Spleen (tissue), 13 donors: ENCODE measurements at regions of chr11 and their contacts with region 1.

Region 1: DNA sequence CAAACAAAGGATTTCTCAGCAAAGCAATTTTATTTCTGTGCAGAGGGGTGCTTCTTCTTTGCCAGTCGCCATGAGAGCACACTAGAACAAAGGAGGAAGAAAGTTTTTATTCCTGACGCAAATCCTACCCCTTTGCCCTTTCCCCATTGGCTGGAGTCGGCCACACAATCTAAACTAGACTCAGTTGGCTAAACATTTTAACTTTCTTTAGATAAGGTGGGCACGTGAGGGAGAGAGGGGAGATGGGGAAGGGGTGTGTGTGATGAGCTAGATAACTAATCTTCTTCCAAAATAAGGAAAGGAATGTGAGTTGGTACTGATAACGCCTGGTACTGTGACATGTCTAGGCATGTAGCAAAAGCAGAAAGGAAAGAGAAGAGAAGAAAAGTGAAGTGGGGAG is 626 bp downstream of the TRIM22 start:
- DNase-seq: no peak
- H3K4me3 ChIP-seq: peak overlapping the region; percentile 41 to 74 (median 70)
- H3K27ac ChIP-seq: peak overlapping the region; percentile 87 to 97 (median 95)
- H3K4me1 ChIP-seq: peaks cover 25 to 68% (median 47%) of the 10 kb centered on the region in 6 donors
- H3K27me3 ChIP-seq: no peaks in the 10 kb centered on the region
- CTCF ChIP-seq: no peak
- POLR2A ChIP-seq: peak in 1 of 3 donors; percentile 37

Region 2: DNA sequence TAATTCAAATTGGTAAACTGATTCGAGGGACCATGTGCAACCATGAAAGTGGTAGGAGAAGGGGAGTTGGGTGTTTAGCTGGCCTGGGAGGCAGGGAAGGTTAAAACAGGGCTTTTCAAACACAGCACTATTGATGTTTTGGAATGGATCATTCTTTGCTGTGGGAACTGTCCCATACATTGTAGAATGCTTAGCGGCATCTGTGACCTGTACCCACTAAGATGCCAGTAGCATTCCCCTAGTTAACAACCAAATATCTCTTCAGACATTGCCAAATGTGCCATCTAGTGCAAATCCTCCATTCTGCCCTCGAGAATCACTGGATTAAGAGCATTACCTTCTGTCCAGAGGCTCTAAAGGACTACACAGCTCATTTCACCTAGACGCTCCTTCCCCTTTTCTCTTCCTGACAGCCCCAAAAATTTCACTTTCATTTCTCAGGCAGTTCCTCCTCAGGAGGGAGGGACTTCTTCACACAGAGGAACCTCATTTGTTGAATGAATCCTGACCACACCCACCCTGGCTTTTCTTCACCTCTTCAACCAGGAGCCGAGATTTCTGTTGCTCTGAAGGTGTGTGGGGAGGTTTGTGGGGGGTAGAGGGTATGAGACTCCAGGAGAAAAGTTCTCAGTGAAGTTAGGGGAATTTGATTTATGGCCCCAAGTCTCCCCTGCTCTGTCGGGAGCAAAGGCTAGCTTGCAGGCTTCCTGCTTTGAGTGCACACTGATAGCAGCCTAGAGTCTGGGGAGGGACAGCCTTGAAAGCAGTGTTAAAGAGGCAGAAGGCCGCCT is 65.5 kb before region 1 on chr11 and contains the start of gene TRIM34:
- intact Hi-C with region 1: loop called (anchors 10 kb)
- DNase-seq: peak; percentile 82
- H3K4me3 ChIP-seq: peak within 1 kb of the TSS; percentile 34 to 74 (median 56)
- H3K27ac ChIP-seq: peak within 1 kb of the TSS; percentile 63 to 93 (median 86)
- H3K4me1 ChIP-seq: peaks cover 4 to 45% (median 29%) of the 10 kb centered on the region in 6 donors
- H3K27me3 ChIP-seq: no peaks in the 10 kb centered on the region
- CTCF ChIP-seq: no peak
- POLR2A ChIP-seq: peak in 1 of 3 donors; percentile 29
- total RNA-seq, gene TRIM34: 13.7 to 21.8 (median 17.7) TPM